ENCODE measurements at regions of chr4 and their contacts with region 1.

Region 1: DNA sequence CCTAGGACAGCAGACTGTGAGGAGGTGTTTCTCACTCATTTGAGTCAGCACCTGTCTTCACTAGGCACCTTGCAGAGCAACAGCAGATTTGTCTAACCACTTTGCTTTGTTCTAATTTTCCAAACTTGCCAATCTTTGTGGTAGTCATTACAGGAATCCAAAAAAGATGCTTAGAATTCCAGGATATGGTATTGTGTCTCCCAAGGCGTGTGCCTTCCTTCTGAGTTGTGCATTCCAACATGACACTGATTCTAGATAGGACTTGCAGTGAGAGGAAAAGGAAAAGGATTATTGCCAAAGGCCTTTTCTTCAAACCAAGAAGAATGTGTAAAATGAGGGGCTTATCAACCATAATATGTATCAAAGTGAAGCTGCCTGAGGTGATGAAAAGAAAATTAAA is 126.2 kb downstream of the MAPK10 start:
- DNase-seq: peak; percentile 41
- H3K4me3 ChIP-seq: no peak overlapping the region
- H3K27ac ChIP-seq: peak overlapping the region; percentile 8
- H3K4me1 ChIP-seq: peaks cover 14% of the 10 kb centered on the region
- H3K27me3 ChIP-seq: no peaks in the 10 kb centered on the region
- CTCF ChIP-seq: no peak

Region 2: DNA sequence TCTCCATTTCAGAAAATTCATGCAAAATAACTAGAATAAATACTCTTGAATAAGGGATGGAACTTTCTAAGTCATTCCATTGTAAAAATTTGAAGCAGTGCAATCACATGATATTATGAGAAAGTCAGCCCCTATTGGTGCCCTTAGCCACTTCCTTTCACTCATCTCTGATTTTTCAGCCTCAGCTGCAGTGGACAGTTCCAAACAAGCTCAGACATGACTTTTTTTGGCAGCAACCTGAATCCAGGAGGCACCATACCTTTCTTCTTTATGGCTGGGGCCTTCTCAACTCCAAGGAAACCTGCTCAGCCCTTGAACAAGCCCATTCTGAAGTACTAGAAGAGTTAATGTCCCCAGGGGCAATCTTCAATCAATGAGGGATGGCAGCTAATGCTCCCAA is 85.7 kb after region 1 on chr4:
- CTCF ChIA-PET with region 1: no interaction called
- dilution Hi-C with region 1: loop called (anchors 10 kb)
- in situ Hi-C with region 1: no loop called
- intact Hi-C with region 1: no loop called
- DNase-seq: peak; percentile 55
- H3K4me3 ChIP-seq: no peak overlapping the region
- H3K27ac ChIP-seq: no peak overlapping the region
- H3K4me1 ChIP-seq: peaks cover 7% of the 10 kb centered on the region
- H3K27me3 ChIP-seq: no peaks in the 10 kb centered on the region
- CTCF ChIP-seq: no peak

Region 3: DNA sequence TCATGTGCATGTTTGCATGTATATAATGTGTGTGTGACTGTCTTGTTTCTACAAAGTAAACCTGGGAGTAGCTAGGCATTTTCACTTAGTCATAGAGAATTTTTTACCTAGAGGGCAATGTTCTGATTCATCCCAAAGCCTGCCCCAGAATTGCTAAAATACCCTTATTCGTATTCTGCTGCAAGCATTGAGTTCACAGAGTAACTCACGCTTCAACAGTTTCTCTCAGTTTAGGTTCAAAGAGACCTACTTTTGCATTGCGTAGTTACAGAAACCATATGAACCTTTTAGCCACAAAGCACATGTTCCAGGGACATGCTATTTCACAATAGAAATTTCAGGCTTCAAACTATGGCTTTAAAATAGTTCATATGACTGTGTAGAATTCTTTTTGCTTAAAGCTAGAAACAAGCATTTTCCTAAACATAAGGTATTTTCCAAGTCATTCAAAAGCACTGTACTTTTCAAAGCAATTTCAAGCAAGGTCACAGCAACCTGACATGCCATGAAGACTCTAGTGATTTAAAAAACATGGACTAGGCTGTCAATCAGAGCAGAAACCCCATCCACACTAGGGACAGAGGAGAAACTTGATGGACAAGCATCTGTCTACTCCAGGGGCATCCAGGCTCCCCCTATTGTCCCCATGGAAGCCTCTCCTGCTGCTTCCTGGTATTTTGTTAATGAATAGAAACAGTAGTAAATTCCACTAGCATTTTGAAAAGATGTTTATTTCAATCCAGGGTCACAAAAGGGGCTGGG is 207.7 kb after region 1 on chr4:
- CTCF ChIA-PET with region 1: no interaction called
- dilution Hi-C with region 1: no loop called
- in situ Hi-C with region 1: no loop called
- intact Hi-C with region 1: loop called (anchors 10 kb)
- DNase-seq: peak; percentile 76
- H3K4me3 ChIP-seq: no peak overlapping the region
- H3K27ac ChIP-seq: peak overlapping the region; percentile 86
- H3K4me1 ChIP-seq: peaks cover 19% of the 10 kb centered on the region
- H3K27me3 ChIP-seq: no peaks in the 10 kb centered on the region
- CTCF ChIP-seq: no peak

Region 4: GRCh38 chr4:86557526-86557925 is 323.8 kb after region 1 on chr4:
- CTCF ChIA-PET with region 1: no interaction called
- dilution Hi-C with region 1: no loop called
- in situ Hi-C with region 1: no loop called
- intact Hi-C with region 1: no loop called
- DNase-seq: peak; percentile 62
- H3K4me3 ChIP-seq: no peak overlapping the region
- H3K27ac ChIP-seq: peak overlapping the region; percentile 76
- H3K4me1 ChIP-seq: peaks cover 22% of the 10 kb centered on the region
- H3K27me3 ChIP-seq: no peaks in the 10 kb centered on the region
- CTCF ChIP-seq: no peak

Region 5: DNA sequence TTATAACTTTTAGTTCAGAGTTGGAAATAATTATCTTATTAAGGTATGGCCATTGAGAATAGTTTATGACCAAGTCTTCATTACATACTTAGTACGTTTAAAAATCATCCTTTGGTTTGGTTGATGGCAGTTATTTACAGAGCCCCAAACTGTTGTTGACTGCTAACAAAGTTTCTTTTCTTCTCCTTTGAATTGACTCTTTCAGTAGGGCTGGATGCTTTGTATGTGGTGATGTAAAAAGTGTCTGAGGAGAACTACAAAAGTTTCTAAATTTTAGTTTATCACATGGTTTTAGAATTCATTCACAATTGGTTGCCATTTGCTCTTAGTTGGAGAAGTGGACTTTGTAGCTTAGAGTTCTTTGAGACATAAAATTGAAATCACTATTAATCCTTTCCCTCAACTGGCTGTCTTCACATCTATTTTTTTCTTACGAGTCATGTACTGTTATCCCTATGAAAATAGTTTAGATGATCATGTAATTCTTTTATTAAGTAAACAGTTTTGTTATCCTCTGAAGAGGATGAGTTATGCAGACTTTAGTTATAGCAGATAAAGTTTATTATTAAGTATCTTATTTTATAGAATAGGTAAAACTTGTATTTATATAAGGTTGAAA is 375.2 kb after region 1 on chr4:
- CTCF ChIA-PET with region 1: no interaction called
- dilution Hi-C with region 1: no loop called
- in situ Hi-C with region 1: no loop called
- intact Hi-C with region 1: no loop called
- DNase-seq: no peak
- H3K4me3 ChIP-seq: no peak overlapping the region
- H3K27ac ChIP-seq: no peak overlapping the region
- H3K4me1 ChIP-seq: no peaks in the 10 kb centered on the region
- H3K27me3 ChIP-seq: no peaks in the 10 kb centered on the region
- CTCF ChIP-seq: no peak